Spleen (tissue), 13 donors: ENCODE measurements at regions of chr6 and their contacts with region 1.

Region 1: GRCh38 chr6:109073344-109074132 is 21.1 kb downstream of the SESN1 start:
- DNase-seq: no peak
- H3K4me3 ChIP-seq: no peak overlapping the region
- H3K27ac ChIP-seq: peak overlapping the region in 1 of 8 donors; percentile 10
- H3K4me1 ChIP-seq: peaks cover 17 to 66% (median 37%) of the 10 kb centered on the region in 6 donors
- H3K27me3 ChIP-seq: no peaks in the 10 kb centered on the region
- CTCF ChIP-seq: peak; percentile 55 to 76 (median 71)
- POLR2A ChIP-seq: no peak

Region 2: DNA sequence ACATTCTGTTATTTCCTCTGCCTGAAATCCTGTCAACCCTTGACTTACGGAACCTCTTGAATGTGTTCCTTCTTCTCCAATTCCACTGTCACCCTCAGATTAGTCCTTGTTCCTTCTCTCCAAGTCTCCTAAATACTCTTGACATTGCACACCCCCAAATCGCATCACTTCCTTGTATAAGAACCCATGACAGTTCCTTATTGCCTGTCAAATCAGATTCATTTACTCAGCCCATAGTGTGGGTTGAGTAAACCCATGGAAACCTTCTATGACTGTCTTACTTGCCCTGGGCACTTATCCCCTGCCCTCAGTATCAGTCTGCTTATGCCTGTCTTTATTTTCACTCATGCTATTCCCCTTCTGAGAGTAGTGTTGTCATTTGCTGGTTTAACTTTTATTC is 184.8 kb before region 1 on chr6:
- intact Hi-C with region 1: no loop called
- DNase-seq: no peak
- H3K4me3 ChIP-seq: no peak overlapping the region
- H3K27ac ChIP-seq: no peak overlapping the region
- H3K4me1 ChIP-seq: peaks cover 0 to 22% (median 15%) of the 10 kb centered on the region in 6 donors
- H3K27me3 ChIP-seq: no peaks in the 10 kb centered on the region
- CTCF ChIP-seq: no peak
- POLR2A ChIP-seq: no peak

Region 3: GRCh38 chr6:108904741-108905140 is 168.8 kb before region 1 on chr6:
- intact Hi-C with region 1: loop called (anchors 10 kb)
- DNase-seq: no peak
- H3K4me3 ChIP-seq: no peak overlapping the region
- H3K27ac ChIP-seq: peak overlapping the region; percentile 13 to 82 (median 76)
- H3K4me1 ChIP-seq: peaks cover 23 to 59% (median 51%) of the 10 kb centered on the region in 6 donors
- H3K27me3 ChIP-seq: no peaks in the 10 kb centered on the region
- CTCF ChIP-seq: no peak
- POLR2A ChIP-seq: no peak